SK-N-SH (cell line): ENCODE measurements at regions of chr15 and their contacts with region 1.

Region 1: DNA sequence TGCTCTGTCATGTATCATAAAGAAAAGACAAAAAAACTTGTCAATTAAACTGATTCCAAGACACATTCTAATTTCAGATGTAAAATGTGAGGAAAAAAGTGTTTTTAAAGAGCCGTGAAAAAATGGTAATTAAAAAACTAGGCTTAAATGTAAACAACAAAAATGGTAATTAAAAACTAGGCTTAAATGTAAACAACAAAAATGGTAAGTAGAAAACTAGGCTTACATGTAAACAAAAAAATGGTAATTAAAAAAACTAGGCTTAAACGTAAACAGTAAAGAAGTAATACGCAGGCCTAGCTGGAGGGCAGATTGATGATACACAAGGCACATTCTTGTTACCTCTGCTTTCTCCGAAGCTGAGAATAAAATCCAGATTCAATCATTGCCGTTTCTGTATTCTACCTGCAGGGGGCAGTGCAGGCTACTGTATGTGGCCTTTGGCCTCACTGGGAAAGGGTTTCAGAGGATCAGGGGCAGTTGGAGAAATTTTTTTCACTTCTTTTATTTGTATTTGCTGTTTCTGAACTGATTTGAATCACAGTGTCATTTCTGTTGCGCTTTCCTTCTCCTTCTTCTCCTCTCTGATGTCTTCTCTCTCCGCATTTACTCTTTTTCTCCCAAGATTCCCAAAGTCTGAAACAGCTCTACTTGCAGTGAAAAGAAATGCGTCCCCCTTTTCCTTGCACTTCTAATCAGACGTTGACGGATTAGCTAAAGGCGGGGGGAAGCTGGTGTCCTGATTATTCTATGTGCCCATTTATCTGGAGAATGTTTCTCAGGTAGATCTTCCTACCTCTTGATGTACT is 67.2 kb upstream of the MCTP2 start:
- DNase-seq: peak; percentile 60
- H3K4me3 ChIP-seq: peak overlapping the region in 1 of 2 experiments; percentile 32; a peak in 1 of 4 replicates
- H3K27ac ChIP-seq: no peak overlapping the region
- H3K4me1 ChIP-seq: no peaks in the 10 kb centered on the region
- H3K27me3 ChIP-seq: no peaks in the 10 kb centered on the region
- CTCF ChIP-seq: peak; percentile 73
- EP300 ChIP-seq: no peak
- RAD21 ChIP-seq: peak; percentile 95

Region 2: GRCh38 chr15:94174399-94174802 is 10.2 kb after region 1 on chr15:
- CTCF ChIA-PET with region 1: interaction called, 16 read pairs
- POLR2A ChIA-PET with region 1: no interaction called
- DNase-seq: no peak
- H3K4me3 ChIP-seq: no peak overlapping the region
- H3K27ac ChIP-seq: no peak overlapping the region
- H3K4me1 ChIP-seq: no peaks in the 10 kb centered on the region
- H3K27me3 ChIP-seq: no peaks in the 10 kb centered on the region
- CTCF ChIP-seq: no peak
- EP300 ChIP-seq: no peak
- RAD21 ChIP-seq: no peak

Region 3: DNA sequence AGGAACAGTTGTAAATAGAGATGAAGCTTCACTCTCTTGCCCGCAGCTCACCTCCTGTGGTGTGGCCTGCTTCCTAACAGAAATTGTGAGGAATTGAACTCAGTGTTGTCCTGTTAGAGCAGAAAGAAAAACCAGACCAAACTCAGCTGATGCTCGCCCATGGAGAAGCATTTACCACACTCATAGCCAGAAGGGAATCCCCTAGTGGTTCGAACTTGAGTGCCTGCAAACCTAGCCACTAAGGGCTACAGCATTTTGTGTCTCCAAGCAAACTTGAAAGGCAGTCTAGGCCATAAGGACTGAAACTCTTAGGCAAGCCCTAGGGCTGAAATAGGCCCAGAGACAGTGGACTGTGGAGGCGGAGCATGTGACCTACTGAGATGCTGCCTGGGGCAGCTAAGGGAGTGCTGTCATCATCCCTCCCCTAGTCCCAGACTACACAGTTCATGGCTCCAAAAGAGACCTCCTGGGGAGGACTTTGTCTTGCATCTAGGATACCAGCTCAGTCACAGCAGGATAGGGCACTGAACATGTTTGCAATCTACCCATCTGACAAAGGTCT is 22.6 kb after region 1 on chr15:
- CTCF ChIA-PET with region 1: interaction called, 12 read pairs
- POLR2A ChIA-PET with region 1: no interaction called
- DNase-seq: no peak
- H3K4me3 ChIP-seq: no peak overlapping the region
- H3K27ac ChIP-seq: no peak overlapping the region
- H3K4me1 ChIP-seq: no peaks in the 10 kb centered on the region
- H3K27me3 ChIP-seq: no peaks in the 10 kb centered on the region
- CTCF ChIP-seq: no peak
- EP300 ChIP-seq: no peak
- RAD21 ChIP-seq: no peak

Region 4: GRCh38 chr15:94324117-94324826 is 160.1 kb after region 1 on chr15:
- CTCF ChIA-PET with region 1: interaction called, 364 read pairs
- POLR2A ChIA-PET with region 1: no interaction called
- DNase-seq: peak; percentile 68
- H3K4me3 ChIP-seq: peak overlapping the region in 1 of 2 experiments; percentile 38; a peak in 1 of 4 replicates
- H3K27ac ChIP-seq: peak overlapping the region in 1 of 2 experiments; percentile 56; a peak in 1 of 4 replicates
- H3K4me1 ChIP-seq: peaks cover 0 to 3% of the 10 kb centered on the region in 2 experiments; a peak in 2 of 4 replicates
- H3K27me3 ChIP-seq: no peaks in the 10 kb centered on the region
- CTCF ChIP-seq: peak; percentile 94
- EP300 ChIP-seq: no peak
- RAD21 ChIP-seq: peak; percentile 98

Region 5: GRCh38 chr15:94346282-94346681 is 182.1 kb after region 1 on chr15:
- CTCF ChIA-PET with region 1: interaction called, 10 read pairs
- POLR2A ChIA-PET with region 1: no interaction called
- DNase-seq: no peak
- H3K4me3 ChIP-seq: no peak overlapping the region
- H3K27ac ChIP-seq: no peak overlapping the region
- H3K4me1 ChIP-seq: no peaks in the 10 kb centered on the region; a peak in 1 of 4 replicates
- H3K27me3 ChIP-seq: no peaks in the 10 kb centered on the region
- CTCF ChIP-seq: no peak
- EP300 ChIP-seq: no peak
- RAD21 ChIP-seq: peak; percentile 20; the same call in 1 of the 2 replicates